ENCODE measurements at regions of chr16 and their contacts with region 1.

Region 1: DNA sequence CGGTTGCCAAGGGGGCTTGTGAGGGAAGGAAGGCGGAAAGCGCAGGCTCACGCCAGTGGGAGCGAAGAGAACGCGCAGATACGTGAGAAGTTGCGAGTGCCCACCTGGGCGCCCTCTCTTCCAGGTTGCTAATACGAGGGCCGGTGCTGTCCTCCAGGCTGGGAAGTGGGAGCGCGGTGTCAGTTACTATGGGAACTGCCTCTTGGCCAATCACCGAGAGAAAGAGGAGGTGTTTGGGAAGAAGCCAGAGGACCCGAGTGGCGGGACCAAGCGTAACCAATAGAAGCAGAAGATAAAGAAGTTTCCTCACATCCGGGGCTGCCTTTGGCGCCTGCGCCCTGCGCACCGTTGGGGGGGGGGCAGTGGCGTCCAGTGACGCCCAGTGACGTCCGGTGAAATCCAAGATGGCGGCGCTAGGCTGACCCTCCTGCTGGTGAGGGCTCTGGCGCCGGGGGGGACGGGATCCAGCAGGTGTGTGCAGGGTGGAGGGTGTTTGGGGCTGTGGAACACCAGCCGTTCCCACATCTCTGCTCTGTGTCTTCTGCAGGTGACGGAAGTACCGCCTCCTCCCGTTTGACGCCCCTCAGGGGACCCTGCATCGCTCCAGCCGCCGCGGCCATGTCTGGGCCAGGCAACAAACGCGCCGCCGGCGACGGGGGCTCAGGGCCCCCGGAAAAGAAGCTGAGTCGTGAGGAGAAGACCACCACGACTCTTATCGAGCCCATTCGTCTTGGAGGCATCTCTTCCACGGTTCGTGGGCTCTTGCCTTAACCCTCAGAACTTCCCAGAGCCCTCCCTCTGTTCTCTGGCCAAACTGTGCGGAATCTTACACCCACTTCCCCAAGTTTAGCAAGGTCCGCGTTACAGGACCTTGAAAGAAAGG is at the starts of genes CFAP119 and RNF40:
- DNase-seq: peak; percentile 97 to 100
- ATAC-seq: peak; percentile 90 to 95
- H3K4me3 ChIP-seq: peak within 1 kb of the TSS; percentile 68
- H3K27ac ChIP-seq: peak within 1 kb of the TSS; percentile 88 to 91
- H3K4me1 ChIP-seq: peaks cover 19% of the 10 kb centered on the region
- CTCF ChIP-seq: no peak
- EP300 ChIP-seq: no peak
- POLR2A ChIP-seq: peak; percentile 78
- RAD21 ChIP-seq: no peak
- polyA plus RNA-seq, gene CFAP119: 3.5 and 4.5 TPM in 2 replicates
- polyA plus RNA-seq, gene RNF40: 66.1 and 88.8 TPM in 2 replicates

Region 2: GRCh38 chr16:30775392-30776188 is 13.4 kb after region 1 on chr16:
- CTCF ChIA-PET with region 1: interaction called, 18 read pairs
- POLR2A ChIA-PET with region 1: interaction called, 4 read pairs
- DNase-seq: peak; percentile 88 to 96
- ATAC-seq: peak; percentile 80 to 89
- H3K4me3 ChIP-seq: peak overlapping the region; percentile 59
- H3K27ac ChIP-seq: peak overlapping the region; percentile 91 to 99
- H3K4me1 ChIP-seq: peaks cover 11% of the 10 kb centered on the region
- CTCF ChIP-seq: no peak
- EP300 ChIP-seq: no peak
- POLR2A ChIP-seq: peak; percentile 71
- RAD21 ChIP-seq: no peak

Measured in A549 (cell line).